ENCODE measurements at regions of chr20 and their contacts with region 1.

Region 1: DNA sequence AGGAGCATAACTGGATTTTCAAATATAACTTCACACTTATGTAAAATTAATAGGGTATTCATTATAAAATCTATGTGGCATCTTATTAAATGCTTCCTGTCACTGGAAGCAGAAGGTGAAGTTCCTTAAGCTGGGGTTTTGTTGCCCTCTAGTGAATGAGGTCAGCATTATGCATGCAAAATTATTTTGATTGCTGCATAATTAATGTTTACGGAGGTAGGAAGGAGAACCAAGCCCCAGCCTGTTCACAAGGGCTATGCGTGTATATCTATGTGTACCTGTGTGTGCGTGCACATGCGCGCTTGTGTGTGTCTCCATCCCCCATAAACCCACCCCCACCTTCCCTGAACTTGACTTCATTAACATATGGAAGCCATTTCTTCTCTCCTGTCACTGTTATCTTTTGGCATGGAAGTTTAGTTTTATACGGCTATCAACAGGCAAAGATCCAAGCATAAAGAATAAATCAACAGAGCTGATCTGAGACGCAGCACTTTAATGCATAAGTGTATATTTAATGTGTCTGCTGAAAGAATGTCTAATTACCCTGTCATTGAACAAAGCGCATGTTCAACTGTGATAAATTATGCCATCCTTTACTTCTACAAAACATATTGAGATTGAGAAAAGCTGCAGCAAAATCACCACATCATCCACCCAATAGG is 90.2 kb upstream of the CDH4 start:
- DNase-seq: no peak
- H3K4me3 ChIP-seq: no peak overlapping the region
- H3K27ac ChIP-seq: no peak overlapping the region
- H3K27me3 ChIP-seq: peaks cover 13% of the 10 kb centered on the region
- CTCF ChIP-seq: peak; percentile 38

Region 2: DNA sequence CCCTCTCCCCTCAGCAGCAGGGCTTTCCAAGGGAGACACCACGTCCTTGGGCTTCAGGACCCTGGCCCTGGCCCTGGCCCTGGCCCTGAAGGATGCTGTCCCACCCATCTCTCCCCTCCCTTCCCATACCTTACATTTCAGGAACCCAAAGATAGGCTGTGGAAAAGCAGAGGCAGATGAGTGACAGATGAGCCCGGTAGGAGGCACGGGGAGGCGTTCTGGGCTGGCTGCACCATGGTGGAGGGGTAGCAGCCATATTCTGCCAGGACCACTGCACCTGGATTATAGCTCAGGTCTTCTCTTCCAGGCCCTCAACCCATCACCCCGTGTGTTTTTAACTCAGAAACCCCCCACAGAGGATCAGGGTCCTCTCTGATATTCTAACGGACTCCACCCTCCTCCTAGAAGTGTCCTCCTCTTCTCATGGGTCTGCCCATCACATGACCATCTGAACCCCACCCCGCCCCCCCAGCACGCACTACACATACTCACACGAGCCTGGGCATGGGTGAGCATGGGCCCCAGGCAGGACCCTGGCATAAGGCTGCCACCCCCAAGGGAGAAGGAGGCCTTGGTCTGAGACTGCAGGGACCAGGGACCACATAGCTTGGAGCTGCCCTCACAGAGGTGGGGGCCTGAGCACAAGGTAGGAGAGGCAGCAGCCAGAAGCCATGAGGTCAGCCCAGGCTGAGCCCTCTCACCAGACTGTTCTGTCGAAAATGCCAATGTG is 130.6 kb before region 1 on chr20:
- CTCF ChIA-PET with region 1: interaction called, 17 read pairs
- POLR2A ChIA-PET with region 1: no interaction called
- DNase-seq: no peak
- H3K4me3 ChIP-seq: no peak overlapping the region
- H3K27ac ChIP-seq: no peak overlapping the region
- H3K27me3 ChIP-seq: no peaks in the 10 kb centered on the region
- CTCF ChIP-seq: no peak